HCT116 (cell line): ENCODE measurements at regions of chr11 and their contacts with region 1.

Region 1: GRCh38 chr11:22846726-22847125 is 13.5 kb downstream of the CCDC179 start:
- DNase-seq: no peak
- ATAC-seq: no peak
- H3K4me3 ChIP-seq: no peak overlapping the region
- H3K27ac ChIP-seq: no peak overlapping the region
- H3K4me1 ChIP-seq: no peaks in the 10 kb centered on the region
- H3K27me3 ChIP-seq: no peaks in the 10 kb centered on the region
- CTCF ChIP-seq: no peak
- POLR2A ChIP-seq: no peak
- RAD21 ChIP-seq: no peak

Region 2: DNA sequence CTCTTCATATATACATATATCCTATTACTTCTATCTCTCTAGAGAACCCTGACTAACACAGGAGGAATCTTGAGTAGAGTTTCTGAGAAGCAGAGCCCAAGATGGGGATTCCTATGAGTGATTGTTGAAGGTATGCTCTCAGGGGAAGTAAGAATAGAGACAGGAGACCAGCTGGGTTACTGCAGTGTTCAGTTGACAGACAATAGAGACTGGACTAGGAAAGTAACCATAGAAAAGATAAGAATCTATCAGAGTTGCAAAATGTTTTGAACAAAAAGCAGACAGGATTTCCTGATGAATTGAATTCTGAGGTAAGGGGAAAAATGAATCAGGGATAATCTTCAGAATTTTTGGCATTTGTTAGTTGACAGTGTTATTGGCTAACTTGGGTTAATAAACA is 454.2 kb before region 1 on chr11:
- CTCF ChIA-PET with region 1: no interaction called
- POLR2A ChIA-PET with region 1: no interaction called
- RAD21 ChIA-PET with region 1: no interaction called
- intact Hi-C with region 1: no loop called
- DNase-seq: no peak
- ATAC-seq: no peak
- H3K4me3 ChIP-seq: no peak overlapping the region
- H3K27ac ChIP-seq: no peak overlapping the region
- H3K4me1 ChIP-seq: no peaks in the 10 kb centered on the region
- H3K27me3 ChIP-seq: no peaks in the 10 kb centered on the region
- CTCF ChIP-seq: no peak
- POLR2A ChIP-seq: no peak
- RAD21 ChIP-seq: no peak

Region 3: GRCh38 chr11:22809893-22810292 is 36.8 kb before region 1 on chr11:
- CTCF ChIA-PET with region 1: interaction called, 3 read pairs
- POLR2A ChIA-PET with region 1: no interaction called
- RAD21 ChIA-PET with region 1: no interaction called
- intact Hi-C with region 1: loop called (anchors 2 kb)
- DNase-seq: no peak
- ATAC-seq: no peak
- H3K4me3 ChIP-seq: no peak overlapping the region
- H3K27ac ChIP-seq: no peak overlapping the region
- H3K4me1 ChIP-seq: no peaks in the 10 kb centered on the region
- H3K27me3 ChIP-seq: no peaks in the 10 kb centered on the region
- CTCF ChIP-seq: no peak
- POLR2A ChIP-seq: no peak
- RAD21 ChIP-seq: no peak